Panc1 (cell line): ENCODE measurements at regions of chr17 and their contacts with region 1.

Region 1: DNA sequence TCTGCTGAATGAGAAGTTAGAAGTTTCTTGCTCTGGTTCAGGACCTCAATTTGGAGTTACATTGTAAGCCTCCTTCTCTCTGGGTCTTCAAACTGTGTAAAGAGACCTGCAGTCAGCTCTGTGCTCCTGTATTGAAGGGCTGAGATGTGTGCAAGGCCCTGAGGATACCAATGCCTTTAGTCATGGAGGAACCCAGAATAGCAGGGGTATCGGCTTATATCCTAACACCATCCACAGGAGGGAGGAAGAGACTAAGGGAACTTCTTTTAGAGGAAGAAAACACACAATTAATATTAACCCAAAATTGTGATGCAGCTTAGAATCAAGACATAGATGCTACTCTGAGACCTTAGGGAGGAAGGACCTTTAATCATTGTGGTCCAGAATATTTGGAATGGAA is 36.5 kb downstream of the GLP2R start:
- DNase-seq: no peak
- ATAC-seq: no peak
- H3K4me3 ChIP-seq: no peak overlapping the region
- H3K27ac ChIP-seq: no peak overlapping the region
- H3K4me1 ChIP-seq: no peaks in the 10 kb centered on the region
- H3K27me3 ChIP-seq: no peaks in the 10 kb centered on the region; the same call in 1 of the 2 replicates
- CTCF ChIP-seq: no peak

Region 2: GRCh38 chr17:9875441-9875840 is 13.2 kb after region 1 on chr17:
- CTCF ChIA-PET with region 1: no interaction called
- POLR2A ChIA-PET with region 1: no interaction called
- in situ Hi-C with region 1: no loop called
- intact Hi-C with region 1: loop called (anchors 1 kb)
- DNase-seq: no peak
- ATAC-seq: peak; percentile 85
- H3K4me3 ChIP-seq: no peak overlapping the region
- H3K27ac ChIP-seq: no peak overlapping the region
- H3K4me1 ChIP-seq: no peaks in the 10 kb centered on the region
- H3K27me3 ChIP-seq: no peaks in the 10 kb centered on the region
- CTCF ChIP-seq: no peak